IMR-90 (cell line): ENCODE measurements at regions of chr16 and their contacts with region 1.

Region 1: DNA sequence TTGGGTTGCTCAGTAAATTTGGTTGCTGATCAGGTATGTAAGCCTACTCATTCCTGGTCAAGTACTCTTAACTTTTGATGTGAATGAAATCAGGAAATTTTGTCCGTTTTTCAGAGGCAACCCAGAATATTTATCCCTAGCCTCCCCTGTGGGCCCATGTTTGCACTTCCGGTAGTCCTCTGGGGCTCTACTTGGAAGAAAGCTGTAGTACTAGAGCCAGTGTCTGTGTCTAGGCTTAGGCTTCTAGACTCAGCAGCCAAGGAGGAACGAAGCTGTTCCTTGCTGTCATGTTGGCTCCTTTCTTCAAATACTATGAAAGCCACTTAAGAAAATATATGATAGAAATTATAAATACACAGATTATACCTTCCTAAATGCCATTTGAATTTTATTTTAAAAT is 21.2 kb downstream of the ESRP2 start:
- DNase-seq: no peak
- ATAC-seq: no peak
- H3K4me3 ChIP-seq: no peak overlapping the region
- H3K27ac ChIP-seq: no peak overlapping the region
- H3K4me1 ChIP-seq: no peaks in the 10 kb centered on the region
- H3K27me3 ChIP-seq: no peaks in the 10 kb centered on the region
- CTCF ChIP-seq: no peak
- POLR2A ChIP-seq: no peak
- RAD21 ChIP-seq: no peak

Region 2: GRCh38 chr16:67968400-67969253 is 246.1 kb before region 1 on chr16 and contains the start of gene SLC12A4:
- CTCF ChIA-PET with region 1: no interaction called
- POLR2A ChIA-PET with region 1: interaction called, 11 read pairs
- dilution Hi-C with region 1: no loop called
- in situ Hi-C with region 1: no loop called
- intact Hi-C with region 1: no loop called
- DNase-seq: peak; percentile 65
- ATAC-seq: peak; percentile 85
- H3K4me3 ChIP-seq: peak within 1 kb of the TSS; percentile 100
- H3K27ac ChIP-seq: peak within 1 kb of the TSS; percentile 99
- H3K4me1 ChIP-seq: peaks cover 30% of the 10 kb centered on the region
- H3K27me3 ChIP-seq: no peaks in the 10 kb centered on the region
- CTCF ChIP-seq: no peak
- POLR2A ChIP-seq: peak; percentile 75
- RAD21 ChIP-seq: no peak
- total RNA-seq, gene SLC12A4: 36.4 and 36.6 TPM in 2 replicates